ENCODE measurements at regions of chr18 and their contacts with region 1.

Region 1: DNA sequence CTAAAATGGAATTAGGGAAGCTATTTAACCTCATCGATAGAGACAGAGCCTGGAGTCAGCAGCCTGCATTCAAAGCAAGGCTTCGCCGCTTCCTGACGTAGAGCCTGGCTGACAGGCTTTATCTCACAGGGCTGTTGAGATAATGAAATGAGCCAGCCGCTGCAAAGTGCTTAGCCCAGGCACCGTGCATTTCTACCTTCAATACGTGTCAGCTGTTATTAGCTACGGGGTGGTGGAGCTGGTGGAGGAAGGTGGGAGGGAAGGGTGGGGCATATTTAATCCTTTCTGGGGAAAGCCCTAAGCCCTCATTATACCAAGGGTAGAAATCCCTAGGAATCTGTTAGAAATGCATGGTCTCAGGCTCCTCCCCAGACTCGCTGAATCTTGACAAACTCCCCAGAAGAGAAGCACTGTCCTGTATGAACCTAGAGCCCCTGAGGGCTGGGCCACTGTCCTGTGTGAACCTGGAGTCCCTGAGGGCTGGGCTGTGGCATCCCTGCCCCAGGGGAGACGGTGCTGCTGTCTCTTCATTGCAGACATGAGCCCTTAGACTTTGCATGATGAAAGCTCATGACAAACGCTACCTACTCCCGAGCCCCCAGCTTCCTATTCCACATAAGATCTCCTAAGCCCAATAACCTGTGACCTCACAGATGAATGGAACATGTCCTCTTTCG is 72.4 kb downstream of the ALPK2 start:
- DNase-seq: no peak
- H3K4me3 ChIP-seq: no peak overlapping the region
- H3K27ac ChIP-seq: no peak overlapping the region
- H3K4me1 ChIP-seq: no peaks in the 10 kb centered on the region
- H3K27me3 ChIP-seq: no peaks in the 10 kb centered on the region
- CTCF ChIP-seq: no peak
- EP300 ChIP-seq: no peak
- POLR2A ChIP-seq: no peak
- RAD21 ChIP-seq: no peak

Region 2: DNA sequence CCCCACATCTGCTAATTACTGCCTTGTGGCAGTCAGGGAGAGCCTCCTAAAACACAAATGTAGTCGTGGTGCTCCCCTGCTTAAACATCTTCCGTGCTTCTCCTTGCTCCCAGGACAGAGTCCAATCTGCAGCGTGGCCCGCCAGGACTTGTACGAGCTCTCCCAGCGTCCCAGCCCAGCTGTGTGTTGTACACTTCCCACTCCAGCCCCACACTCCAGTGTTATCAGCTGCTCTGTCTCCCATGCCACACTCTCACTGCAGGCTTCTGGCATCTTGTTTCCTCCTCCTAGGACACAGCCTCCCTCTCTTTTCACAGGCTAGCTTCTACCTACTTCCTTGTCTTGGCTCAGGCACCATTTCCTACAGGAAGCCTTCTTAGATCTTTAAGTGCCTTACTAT is 127.0 kb before region 1 on chr18:
- CTCF ChIA-PET with region 1: no interaction called
- POLR2A ChIA-PET with region 1: no interaction called
- DNase-seq: no peak
- H3K4me3 ChIP-seq: no peak overlapping the region
- H3K27ac ChIP-seq: no peak overlapping the region
- H3K4me1 ChIP-seq: peaks cover 0 to 4% (median 0%) of the 10 kb centered on the region in 4 experiments; a peak in 2 of 7 replicates
- H3K27me3 ChIP-seq: no peaks in the 10 kb centered on the region
- CTCF ChIP-seq: no peak
- EP300 ChIP-seq: no peak
- POLR2A ChIP-seq: no peak
- RAD21 ChIP-seq: no peak

Region 3: GRCh38 chr18:58541789-58542425 is 14.6 kb before region 1 on chr18:
- CTCF ChIA-PET with region 1: interaction called, 18 read pairs
- POLR2A ChIA-PET with region 1: interaction called, 4 read pairs
- DNase-seq: peak in 1 of 2 experiments; percentile 23
- H3K4me3 ChIP-seq: no peak overlapping the region
- H3K27ac ChIP-seq: no peak overlapping the region
- H3K4me1 ChIP-seq: peaks cover 0 to 9% (median 2%) of the 10 kb centered on the region in 4 experiments; a peak in 3 of 7 replicates
- H3K27me3 ChIP-seq: no peaks in the 10 kb centered on the region; a peak in 1 of 7 replicates
- CTCF ChIP-seq: no peak
- EP300 ChIP-seq: no peak
- POLR2A ChIP-seq: no peak
- RAD21 ChIP-seq: no peak

Region 4: DNA sequence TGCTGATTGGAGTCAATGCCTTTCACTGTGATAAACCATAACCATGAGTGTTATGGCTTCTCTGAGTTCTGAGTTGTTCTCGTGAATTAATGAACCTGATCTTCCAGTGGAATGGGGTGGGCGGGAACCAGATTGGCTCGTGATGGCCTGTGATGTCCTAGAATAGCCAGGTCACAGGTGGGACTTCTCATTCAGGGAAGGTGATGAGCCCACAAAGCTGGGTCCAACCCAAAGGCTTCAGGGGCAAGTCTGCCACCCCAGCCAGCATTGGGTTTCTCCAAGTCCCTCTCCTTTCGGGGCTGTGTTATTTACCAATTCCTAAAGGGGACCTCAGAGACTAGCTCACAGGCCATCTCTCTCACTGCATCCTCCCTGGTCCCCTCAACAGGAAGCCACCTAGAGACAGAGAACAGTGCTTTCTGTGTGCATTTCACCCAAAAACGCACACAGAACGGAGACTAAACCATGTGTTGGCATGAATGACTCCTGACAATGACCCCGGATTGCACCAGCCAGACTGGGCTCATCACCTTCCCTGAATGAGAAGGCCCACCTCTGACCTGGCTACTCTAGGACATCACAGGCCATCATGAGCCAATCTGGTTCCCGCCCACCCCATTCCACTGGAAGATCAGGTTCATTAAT is 200.2 kb after region 1 on chr18:
- CTCF ChIA-PET with region 1: no interaction called
- POLR2A ChIA-PET with region 1: no interaction called
- DNase-seq: no peak
- H3K4me3 ChIP-seq: no peak overlapping the region
- H3K27ac ChIP-seq: no peak overlapping the region
- H3K4me1 ChIP-seq: peaks cover 0 to 5% (median 0%) of the 10 kb centered on the region in 4 experiments; a peak in 5 of 7 replicates
- H3K27me3 ChIP-seq: no peaks in the 10 kb centered on the region
- CTCF ChIP-seq: no peak
- EP300 ChIP-seq: no peak
- POLR2A ChIP-seq: no peak
- RAD21 ChIP-seq: no peak

Measured in H1 (cell line).